ENCODE measurements at regions of chr15 and their contacts with region 1.

Region 1: GRCh38 chr15:32786906-32787305 is 69.1 kb downstream of the GREM1 start:
- DNase-seq: no peak
- H3K4me3 ChIP-seq: no peak overlapping the region
- H3K27ac ChIP-seq: no peak overlapping the region
- H3K4me1 ChIP-seq: peaks cover 0 to 8% (median 3%) of the 10 kb centered on the region in 4 donors
- H3K27me3 ChIP-seq: no peaks in the 10 kb centered on the region
- CTCF ChIP-seq: no peak
- EP300 ChIP-seq: no peak
- POLR2A ChIP-seq: no peak

Region 2: GRCh38 chr15:32774022-32774421 is 12.9 kb before region 1 on chr15:
- intact Hi-C with region 1: loop called (anchors 1 kb)
- DNase-seq: no peak
- H3K4me3 ChIP-seq: no peak overlapping the region
- H3K27ac ChIP-seq: no peak overlapping the region
- H3K4me1 ChIP-seq: no peaks in the 10 kb centered on the region
- H3K27me3 ChIP-seq: no peaks in the 10 kb centered on the region
- CTCF ChIP-seq: no peak
- EP300 ChIP-seq: no peak
- POLR2A ChIP-seq: no peak